ENCODE measurements at regions of chr5 and their contacts with region 1.

Region 1: DNA sequence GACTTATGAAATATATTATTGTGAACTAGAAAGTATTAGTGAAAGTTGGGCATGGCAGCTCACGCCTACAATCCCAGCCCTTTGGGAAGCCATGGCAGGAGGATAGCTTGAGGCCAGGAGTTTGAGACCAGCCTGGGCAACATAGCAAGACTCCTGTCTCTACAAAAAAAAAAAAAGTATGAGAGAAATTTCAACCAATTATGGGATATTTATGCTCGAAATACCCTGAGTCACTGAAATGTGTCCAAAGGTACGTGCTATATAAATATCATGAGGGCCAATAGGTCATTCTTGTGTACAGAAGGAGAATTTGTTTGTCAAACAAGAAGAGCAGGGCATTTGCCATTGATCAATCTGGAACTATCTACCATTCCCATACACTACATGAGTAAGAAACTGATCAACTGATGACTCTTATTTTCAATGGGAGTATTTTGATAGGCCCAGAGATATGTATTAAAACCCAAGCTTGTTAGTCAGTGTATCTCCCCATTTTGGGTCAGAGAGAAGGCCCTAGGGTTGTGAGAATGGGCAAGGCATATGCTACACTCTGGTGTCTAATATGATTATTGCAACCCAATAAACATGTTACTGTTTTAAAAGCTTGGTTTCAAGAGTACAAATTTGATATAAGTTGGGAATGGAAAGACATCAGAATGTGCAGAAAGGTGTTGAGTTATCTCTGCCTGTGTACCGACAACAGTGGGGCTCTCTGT is 21.7 kb upstream of the HOMER1 start:
- DNase-seq: no peak
- H3K4me3 ChIP-seq: no peak overlapping the region
- CTCF ChIP-seq: no peak

Region 2: GRCh38 chr5:79552984-79553383 is 17.3 kb after region 1 on chr5:
- CTCF ChIA-PET with region 1: interaction called, 11 read pairs
- POLR2A ChIA-PET with region 1: no interaction called
- DNase-seq: no peak
- H3K4me3 ChIP-seq: no peak overlapping the region
- CTCF ChIP-seq: no peak

Measured in AG04449 (cell line).